H1 (cell line): ENCODE measurements at regions of chr15 and their contacts with region 1.

Region 1: GRCh38 chr15:89291934-89292438 is 42.6 kb downstream of the POLG start:
- DNase-seq: no peak
- H3K4me3 ChIP-seq: no peak overlapping the region
- H3K27ac ChIP-seq: no peak overlapping the region
- H3K4me1 ChIP-seq: no peaks in the 10 kb centered on the region
- H3K27me3 ChIP-seq: no peaks in the 10 kb centered on the region
- CTCF ChIP-seq: no peak
- EP300 ChIP-seq: no peak
- POLR2A ChIP-seq: no peak
- RAD21 ChIP-seq: no peak

Region 2: DNA sequence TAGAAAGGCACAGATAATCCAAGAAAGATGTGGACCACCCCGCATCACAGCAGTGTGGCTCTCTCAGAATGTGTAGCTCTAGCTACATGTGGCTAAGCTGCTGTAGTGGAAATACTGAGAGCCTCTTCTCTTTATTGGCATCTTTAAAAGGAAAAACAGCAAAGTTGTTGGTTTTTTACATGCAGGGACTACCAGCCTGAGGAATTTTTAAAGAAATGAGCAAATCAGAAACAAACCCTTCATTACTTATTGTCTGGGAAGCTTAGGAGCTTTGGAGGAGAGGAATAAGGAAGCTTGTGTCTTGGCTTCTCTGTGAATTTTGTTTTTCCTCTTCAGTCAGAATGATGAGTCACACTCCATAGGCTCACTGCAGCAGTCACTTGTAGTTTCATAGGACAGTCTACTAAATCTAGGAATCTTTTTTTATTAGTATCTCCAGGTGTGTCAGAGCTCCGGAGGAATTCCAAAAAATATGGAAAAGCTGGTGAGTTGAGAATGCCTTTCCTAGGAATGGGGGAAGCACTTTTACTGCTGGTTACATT is 15.1 kb after region 1 on chr15:
- CTCF ChIA-PET with region 1: interaction called, 10 read pairs
- POLR2A ChIA-PET with region 1: no interaction called
- DNase-seq: no peak
- H3K4me3 ChIP-seq: no peak overlapping the region
- H3K27ac ChIP-seq: no peak overlapping the region
- H3K4me1 ChIP-seq: no peaks in the 10 kb centered on the region
- H3K27me3 ChIP-seq: no peaks in the 10 kb centered on the region
- CTCF ChIP-seq: no peak
- EP300 ChIP-seq: no peak
- POLR2A ChIP-seq: no peak
- RAD21 ChIP-seq: no peak